Endothelial cell of umbilical vein (primary cell): ENCODE measurements at regions of chr4 and their contacts with region 1.

Region 1: DNA sequence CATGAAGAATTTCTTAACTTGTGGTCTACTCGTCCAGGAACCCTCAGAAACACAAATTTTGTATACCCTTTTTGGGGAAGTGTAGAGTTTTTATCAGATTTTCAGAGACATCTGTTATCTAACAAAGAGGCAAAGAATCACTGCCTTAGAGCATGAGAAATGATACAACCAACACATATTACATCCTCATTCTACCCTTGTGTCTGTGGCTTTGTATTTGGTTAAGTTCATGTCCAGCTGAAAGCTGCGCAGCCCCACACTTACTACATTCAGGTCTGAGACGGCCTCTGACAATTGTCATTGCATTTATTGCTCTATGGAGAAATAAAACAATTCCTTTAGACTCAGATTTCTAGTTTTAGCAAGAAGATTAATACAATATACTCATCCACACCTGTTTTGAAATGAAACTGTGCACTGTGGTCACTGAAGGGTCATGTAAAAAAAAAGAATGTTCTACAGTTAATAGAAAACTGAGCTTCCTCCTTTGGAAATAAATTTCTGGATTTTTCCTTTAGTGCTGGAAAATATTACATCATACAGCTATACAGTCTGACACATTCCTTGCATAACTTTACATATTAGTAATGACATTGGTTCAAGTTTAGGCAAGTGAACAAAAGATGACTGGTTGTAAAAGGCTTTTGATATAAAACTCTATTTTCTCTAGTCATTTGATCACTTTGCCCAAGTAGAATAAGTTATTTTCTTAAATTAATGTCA is 39.8 kb downstream of the GLRB start:
- DNase-seq: peak; percentile 85
- H3K4me3 ChIP-seq: no peak overlapping the region
- H3K27ac ChIP-seq: peak overlapping the region; percentile 94
- H3K4me1 ChIP-seq: peaks cover 12% of the 10 kb centered on the region
- H3K27me3 ChIP-seq: no peaks in the 10 kb centered on the region
- CTCF ChIP-seq: no peak
- POLR2A ChIP-seq: no peak

Region 2: GRCh38 chr4:157004279-157005161 is 111.3 kb before region 1 on chr4:
- CTCF ChIA-PET with region 1: no interaction called
- POLR2A ChIA-PET with region 1: no interaction called
- dilution Hi-C with region 1: no loop called
- intact Hi-C with region 1: loop called (anchors 5 kb)
- DNase-seq: peak; percentile 68
- H3K4me3 ChIP-seq: no peak overlapping the region
- H3K27ac ChIP-seq: peak overlapping the region; percentile 42
- H3K4me1 ChIP-seq: peaks cover 20% of the 10 kb centered on the region
- H3K27me3 ChIP-seq: no peaks in the 10 kb centered on the region
- CTCF ChIP-seq: no peak
- POLR2A ChIP-seq: no peak

Region 3: GRCh38 chr4:157104541-157104940 is 11.2 kb before region 1 on chr4:
- CTCF ChIA-PET with region 1: no interaction called
- POLR2A ChIA-PET with region 1: interaction called, 10 read pairs
- dilution Hi-C with region 1: no loop called
- intact Hi-C with region 1: no loop called
- DNase-seq: no peak
- H3K4me3 ChIP-seq: no peak overlapping the region
- H3K27ac ChIP-seq: no peak overlapping the region
- H3K4me1 ChIP-seq: no peaks in the 10 kb centered on the region
- H3K27me3 ChIP-seq: no peaks in the 10 kb centered on the region
- CTCF ChIP-seq: no peak
- POLR2A ChIP-seq: no peak

Region 4: DNA sequence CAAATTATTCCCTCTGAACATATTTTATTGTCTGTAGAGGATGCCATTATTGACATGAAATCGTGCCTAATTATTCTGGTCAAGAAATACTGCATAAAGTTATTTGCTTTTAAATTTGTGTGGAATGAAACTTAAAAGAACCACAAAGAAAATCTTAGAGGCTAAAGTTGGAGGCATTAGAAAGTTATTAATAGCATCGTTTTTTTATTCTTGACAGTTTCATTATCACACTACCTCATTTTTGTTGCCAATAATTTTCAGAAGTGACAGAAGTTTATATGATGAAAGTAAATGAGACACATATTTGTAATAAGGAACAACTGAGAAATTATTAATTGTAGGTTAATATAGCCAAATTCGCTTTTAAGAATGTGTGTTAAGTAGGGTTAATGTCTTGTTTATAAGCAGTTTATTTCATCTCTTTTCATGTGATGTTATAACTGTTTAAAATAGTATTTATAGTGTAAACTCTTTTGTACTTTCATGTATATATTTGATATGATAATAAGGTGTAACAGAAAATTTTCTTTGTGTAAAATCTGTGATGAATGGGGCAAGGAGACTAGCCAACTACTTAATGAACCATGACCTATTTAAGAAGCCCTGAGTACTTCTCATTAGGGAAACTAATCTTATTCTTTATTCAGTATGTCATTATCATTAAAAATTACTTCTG is 50.3 kb after region 1 on chr4:
- CTCF ChIA-PET with region 1: no interaction called
- POLR2A ChIA-PET with region 1: no interaction called
- dilution Hi-C with region 1: no loop called
- intact Hi-C with region 1: no loop called
- DNase-seq: no peak
- H3K4me3 ChIP-seq: no peak overlapping the region
- H3K27ac ChIP-seq: no peak overlapping the region
- H3K4me1 ChIP-seq: no peaks in the 10 kb centered on the region
- H3K27me3 ChIP-seq: no peaks in the 10 kb centered on the region
- CTCF ChIP-seq: no peak
- POLR2A ChIP-seq: no peak